Breast epithelium (tissue), 4 donors: ENCODE measurements at regions of chr13 and their contacts with region 1.

Region 1: DNA sequence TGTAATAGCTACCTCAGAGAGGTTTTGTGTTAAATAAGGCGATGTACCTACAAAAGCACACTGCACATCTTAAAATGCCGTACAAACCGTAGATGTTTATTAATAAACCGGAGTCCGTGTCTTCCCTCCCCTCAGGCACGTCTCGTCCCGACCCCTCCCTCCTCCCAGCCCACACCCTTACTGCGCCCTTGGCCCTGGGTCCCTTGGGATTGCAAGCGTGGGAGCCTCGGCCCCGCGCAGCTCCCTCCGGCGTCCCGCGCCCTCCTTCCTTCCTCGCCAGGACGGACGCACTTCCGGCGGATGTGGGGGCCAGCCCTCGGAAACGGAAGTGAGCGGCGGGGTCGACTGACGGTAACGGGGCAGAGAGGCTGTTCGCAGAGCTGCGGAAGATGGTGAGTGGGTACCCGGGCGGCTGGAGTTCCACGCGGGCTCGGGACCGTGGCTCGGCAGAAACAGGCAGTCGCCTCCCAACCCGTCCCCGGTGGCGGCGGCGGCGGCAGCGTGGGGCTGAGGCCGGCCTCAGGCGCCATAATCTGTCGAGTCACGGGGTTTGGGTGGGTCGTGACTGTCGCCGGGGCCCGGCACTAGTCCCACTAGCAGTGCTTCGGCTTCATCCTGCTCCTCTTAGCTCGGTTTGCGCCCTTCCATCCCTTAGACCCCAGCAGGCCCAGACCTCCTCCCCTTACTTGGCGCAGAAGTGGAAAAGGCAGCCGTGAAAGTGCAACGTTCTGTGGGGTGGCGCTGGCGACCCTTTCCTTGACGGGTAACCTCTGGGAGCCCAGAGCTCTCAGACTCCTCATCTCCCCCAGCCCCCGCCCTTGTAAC is at the start of gene POMP:
- DNase-seq: peak; percentile 82 to 89
- H3K4me3 ChIP-seq: peak within 1 kb of the TSS; percentile 66 to 98 (median 92)
- H3K27ac ChIP-seq: peak within 1 kb of the TSS; percentile 90 to 98
- H3K4me1 ChIP-seq: peaks cover 0 to 12% of the 10 kb centered on the region in 2 donors
- H3K27me3 ChIP-seq: no peaks in the 10 kb centered on the region
- CTCF ChIP-seq: no peak
- POLR2A ChIP-seq: peak; percentile 97
- total RNA-seq, gene POMP: 47.3 to 72.5 (median 65.5) TPM

Region 2: GRCh38 chr13:28179974-28180373 is 479.0 kb before region 1 on chr13:
- intact Hi-C with region 1: loop called (anchors 5 kb)
- DNase-seq: no peak
- H3K4me3 ChIP-seq: no peak overlapping the region
- H3K27ac ChIP-seq: no peak overlapping the region
- H3K4me1 ChIP-seq: no peaks in the 10 kb centered on the region
- H3K27me3 ChIP-seq: no peaks in the 10 kb centered on the region
- CTCF ChIP-seq: no peak
- POLR2A ChIP-seq: no peak